ENCODE measurements at regions of chr2 and their contacts with region 1.

Region 1: GRCh38 chr2:239318790-239319661 is 81.8 kb downstream of the HDAC4 start:
- DNase-seq: peak; percentile 31
- H3K4me3 Mint-ChIP-seq: peak overlapping the region; percentile 63
- H3K27ac Mint-ChIP-seq: peak overlapping the region; percentile 82
- H3K4me1 Mint-ChIP-seq: peaks cover 77% of the 10 kb centered on the region
- H3K27me3 Mint-ChIP-seq: no peaks in the 10 kb centered on the region

Region 2: DNA sequence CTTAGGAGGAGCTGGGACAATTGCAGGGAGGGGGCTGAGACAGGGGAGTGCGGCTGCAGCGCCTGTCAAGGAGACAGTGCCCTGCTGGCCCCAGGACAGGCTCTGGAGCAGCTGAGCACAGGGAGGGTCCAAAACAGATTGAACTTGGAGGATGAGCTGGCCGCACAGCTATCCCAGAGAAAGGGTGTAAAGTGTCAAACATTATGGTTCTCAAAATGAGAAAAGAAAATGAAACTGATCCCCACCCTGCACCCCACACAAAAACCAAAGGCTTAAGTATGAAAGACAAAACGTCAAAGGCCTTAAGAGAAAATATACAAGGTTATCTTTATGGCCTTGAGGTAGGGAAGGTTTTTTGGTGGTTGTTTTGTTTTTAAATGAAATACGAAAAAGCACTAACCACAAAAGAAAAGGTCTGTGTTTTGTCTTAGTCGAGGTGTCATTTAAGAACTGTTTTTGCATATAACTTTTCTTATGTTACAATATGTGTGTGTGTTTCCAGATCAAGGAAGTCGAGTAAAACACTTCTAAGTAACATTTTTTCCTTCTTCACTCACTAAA is 30.0 kb before region 1 on chr2:
- CTCF ChIA-PET with region 1: no interaction called
- POLR2A ChIA-PET with region 1: interaction called, 13 read pairs
- DNase-seq: peak; percentile 56
- H3K4me3 Mint-ChIP-seq: peak overlapping the region; percentile 75
- H3K27ac Mint-ChIP-seq: peak overlapping the region; percentile 97
- H3K4me1 Mint-ChIP-seq: peaks cover 74% of the 10 kb centered on the region
- H3K27me3 Mint-ChIP-seq: peaks cover 18% of the 10 kb centered on the region

Region 3: DNA sequence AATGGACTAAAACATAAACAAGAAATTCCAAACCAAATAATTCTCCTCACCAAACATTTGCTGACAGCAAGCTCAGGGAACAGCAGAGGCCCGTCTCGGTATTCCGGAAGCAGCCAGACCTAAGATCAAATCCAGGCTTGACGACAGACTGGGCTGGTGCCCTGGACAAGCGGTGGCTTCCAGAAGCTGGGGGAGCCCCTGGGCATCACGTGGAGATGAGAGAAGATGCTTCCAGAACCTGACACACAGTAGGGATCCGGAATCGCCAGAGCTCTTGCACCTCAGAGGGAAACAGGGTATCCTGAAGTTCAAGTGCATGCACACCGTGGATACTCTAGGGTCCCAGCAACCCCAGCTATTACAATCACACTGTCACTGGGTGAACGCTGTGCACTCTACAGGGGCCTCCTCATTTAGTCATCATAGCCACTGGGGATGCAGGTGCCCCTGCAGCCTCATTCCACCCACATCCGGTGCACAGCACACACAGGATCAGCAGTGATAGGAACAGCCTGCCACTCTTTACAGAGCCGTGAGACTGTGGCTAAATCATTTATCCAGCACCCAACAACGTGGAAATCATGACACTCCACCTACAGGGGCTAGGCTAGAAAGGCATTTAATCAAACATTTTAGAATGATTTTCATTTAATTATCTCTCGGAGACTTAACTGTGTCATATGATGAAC is 20.8 kb before region 1 on chr2:
- CTCF ChIA-PET with region 1: interaction called, 3 read pairs
- POLR2A ChIA-PET with region 1: interaction called, 13 read pairs
- DNase-seq: peak; percentile 87
- H3K4me3 Mint-ChIP-seq: peak overlapping the region; percentile 76
- H3K27ac Mint-ChIP-seq: peak overlapping the region; percentile 92
- H3K4me1 Mint-ChIP-seq: peaks cover 69% of the 10 kb centered on the region
- H3K27me3 Mint-ChIP-seq: peaks cover 13% of the 10 kb centered on the region

Measured in activated CD4-positive, alpha-beta memory T cell treated with anti-CD3 and anti-CD28 coated beads, Interleukin-2, amount 10 ng/mL, durations not matched to agents 7 days and 5 days (primary cell).